Breast epithelium (tissue), 4 donors: ENCODE measurements at regions of chr6 and their contacts with region 1.

Region 1: GRCh38 chr6:11317885-11318771 is 85.7 kb upstream of the NEDD9 start:
- DNase-seq: peak; percentile 58 to 89
- H3K4me3 ChIP-seq: no peak overlapping the region
- H3K27ac ChIP-seq: peak overlapping the region; percentile 75 to 77
- H3K4me1 ChIP-seq: peaks cover 0 to 10% of the 10 kb centered on the region in 2 donors
- H3K27me3 ChIP-seq: no peaks in the 10 kb centered on the region
- CTCF ChIP-seq: no peak
- POLR2A ChIP-seq: no peak

Region 2: DNA sequence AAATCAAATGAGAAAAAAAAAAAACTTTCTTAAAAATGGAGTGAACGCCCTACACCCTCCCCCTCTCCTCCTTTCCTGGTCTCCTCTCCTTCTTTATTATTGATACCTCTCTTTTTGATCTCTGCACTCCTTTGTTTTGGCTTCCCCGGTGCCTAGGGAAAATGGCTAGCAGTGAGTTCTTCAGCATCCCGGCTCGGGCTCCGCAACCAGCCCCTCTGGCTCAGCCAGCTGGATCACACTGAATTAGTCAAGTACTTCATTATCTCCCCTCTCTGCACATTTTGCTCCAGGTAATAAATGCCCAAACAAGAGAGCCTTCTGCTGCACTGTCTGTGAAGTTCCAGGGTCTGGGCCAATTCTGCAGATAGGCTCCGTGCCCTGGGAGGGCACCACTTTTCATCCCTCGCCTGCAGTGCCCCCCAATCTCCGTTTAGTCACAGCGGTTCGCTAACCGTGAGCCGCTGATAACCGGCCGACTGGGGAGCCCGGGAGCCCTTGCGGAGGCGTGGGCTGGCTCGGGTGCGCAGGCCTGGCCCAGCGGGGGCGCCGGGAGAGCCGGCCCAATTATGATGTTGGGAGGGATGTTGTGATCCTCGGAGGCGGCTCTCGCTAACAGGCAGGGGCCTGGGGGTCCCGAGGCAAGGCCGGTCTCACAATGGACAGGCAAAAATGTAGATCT is 1205.1 kb before region 1 on chr6:
- intact Hi-C with region 1: no loop called
- DNase-seq: no peak
- H3K4me3 ChIP-seq: peak overlapping the region in 1 of 3 donors; percentile 25
- H3K27ac ChIP-seq: no peak overlapping the region
- H3K4me1 ChIP-seq: no peaks in the 10 kb centered on the region
- H3K27me3 ChIP-seq: no peaks in the 10 kb centered on the region
- CTCF ChIP-seq: no peak
- POLR2A ChIP-seq: no peak

Region 3: GRCh38 chr6:10891770-10892359 is 426.3 kb before region 1 on chr6:
- intact Hi-C with region 1: loop called (anchors 5 kb)
- DNase-seq: no peak
- H3K4me3 ChIP-seq: no peak overlapping the region
- H3K27ac ChIP-seq: no peak overlapping the region
- H3K4me1 ChIP-seq: no peaks in the 10 kb centered on the region
- H3K27me3 ChIP-seq: peaks cover 0 to 4% of the 10 kb centered on the region in 2 donors
- CTCF ChIP-seq: no peak
- POLR2A ChIP-seq: no peak